Left colon (tissue), 2 donors: ENCODE measurements at regions of chr6 and their contacts with region 1.

Region 1: GRCh38 chr6:31541658-31542521 is at the start of gene DDX39B:
- DNase-seq: peak; percentile 94 to 97
- ATAC-seq: peak; percentile 85
- total RNA-seq, gene DDX39B: 221 to 269 TPM

Region 2: DNA sequence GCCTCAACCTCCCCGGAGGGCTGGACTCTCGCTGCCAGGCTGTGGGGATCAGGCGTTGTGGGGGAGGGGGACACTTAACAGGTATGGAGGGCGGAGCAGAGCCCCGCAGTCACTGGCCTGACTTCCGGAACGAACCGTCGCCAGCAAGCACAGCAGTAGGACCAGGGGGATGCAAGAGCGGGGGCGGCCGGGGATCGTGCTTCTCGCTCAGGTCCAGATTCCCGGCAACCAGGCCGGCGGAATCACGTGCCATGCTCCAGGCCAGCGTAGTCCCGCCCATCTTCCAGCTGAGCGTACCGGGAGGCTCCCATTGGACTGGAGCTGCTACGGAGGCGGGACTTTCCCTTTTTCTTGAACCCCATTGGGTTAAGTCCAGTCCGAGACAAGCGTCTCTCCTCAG is 361.4 kb before region 1 on chr6:
- intact Hi-C with region 1: no loop called
- DNase-seq: peak in 1 of 2 donors; percentile 62
- ATAC-seq: peak; percentile 38

Region 3: GRCh38 chr6:31597006-31597405 is 55.1 kb after region 1 on chr6:
- intact Hi-C with region 1: loop called in 1 of 2 experiments (anchors 2 kb)
- DNase-seq: no peak
- ATAC-seq: peak; percentile 47